Activated CD4-positive, alpha-beta T cell treated with anti-CD3 and anti-CD28 coated beads for 36 hours (primary cell): ENCODE measurements at regions of chr10 and their contacts with region 1.

Region 1: DNA sequence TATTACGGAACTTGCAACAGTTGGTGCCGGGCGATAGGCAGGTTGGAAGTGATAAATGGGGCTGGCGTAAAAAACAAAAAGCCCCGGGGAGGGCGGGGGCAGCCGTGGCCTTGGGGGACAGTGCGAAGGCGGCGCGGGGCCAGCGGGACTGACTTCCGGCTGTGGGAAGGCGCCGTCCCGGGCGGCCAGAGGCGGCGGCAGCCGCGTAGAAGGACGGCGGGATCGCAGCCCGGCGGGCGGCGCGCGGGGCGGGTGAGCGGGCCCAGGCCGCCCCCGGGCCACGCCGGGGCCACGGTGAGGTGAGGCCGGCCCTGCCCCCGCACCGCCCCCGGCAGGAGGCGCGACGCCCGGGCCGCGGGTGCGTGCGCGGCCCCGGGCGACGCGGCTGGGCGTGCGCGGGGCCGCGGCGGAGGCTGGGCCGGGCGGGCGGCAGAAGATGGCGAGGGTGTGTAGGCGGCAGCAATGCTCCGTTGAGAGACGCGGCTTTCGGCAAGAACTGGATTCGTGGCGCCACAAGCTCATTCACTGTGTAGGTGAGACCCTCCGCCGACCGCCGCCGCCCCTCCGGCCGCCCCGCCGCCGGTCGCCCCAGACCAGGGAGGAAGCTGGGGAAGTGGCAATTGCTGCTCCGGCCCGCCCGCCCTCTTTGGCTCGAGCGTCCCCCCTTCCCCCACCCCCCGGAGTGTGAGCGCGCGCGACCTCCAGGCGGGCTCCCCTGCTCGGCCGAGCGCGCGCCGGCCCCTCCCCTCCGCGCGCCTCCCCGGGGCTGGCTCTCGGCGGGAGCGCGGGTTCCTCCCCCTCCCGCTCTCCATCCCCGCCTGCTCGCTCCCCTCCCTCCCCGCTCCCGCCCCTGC is at the start of gene LCOR:
- DNase-seq: peak; percentile 91
- ATAC-seq: peak; percentile 71
- H3K4me3 Mint-ChIP-seq: peak within 1 kb of the TSS; percentile 96
- H3K27ac Mint-ChIP-seq: peak within 1 kb of the TSS; percentile 96
- H3K4me1 Mint-ChIP-seq: peaks cover 49% of the 10 kb centered on the region
- H3K27me3 Mint-ChIP-seq: no peaks in the 10 kb centered on the region
- total RNA-seq, gene LCOR: 22.0 to 23.4 TPM

Region 2: GRCh38 chr10:96089670-96090462 is 742.2 kb before region 1 on chr10:
- CTCF ChIA-PET with region 1: no interaction called
- POLR2A ChIA-PET with region 1: no interaction called
- intact Hi-C with region 1: loop called in 1 of 2 experiments (anchors 1 kb)
- DNase-seq: peak; percentile 95
- ATAC-seq: peak; percentile 91
- H3K4me3 Mint-ChIP-seq: peak overlapping the region; percentile 92
- H3K27ac Mint-ChIP-seq: peak overlapping the region; percentile 99
- H3K4me1 Mint-ChIP-seq: peaks cover 6% of the 10 kb centered on the region
- H3K27me3 Mint-ChIP-seq: peaks cover 15% of the 10 kb centered on the region

Region 3: GRCh38 chr10:96586419-96587263 is 245.5 kb before region 1 on chr10 and contains the start of gene TM9SF3:
- CTCF ChIA-PET with region 1: interaction called, 3 read pairs
- POLR2A ChIA-PET with region 1: no interaction called
- intact Hi-C with region 1: loop called (anchors 1 kb)
- DNase-seq: peak; percentile 97
- ATAC-seq: peak; percentile 64
- H3K4me3 Mint-ChIP-seq: no peak within 1 kb of the TSS
- H3K27ac Mint-ChIP-seq: peak within 1 kb of the TSS; percentile 92
- H3K4me1 Mint-ChIP-seq: peaks cover 33% of the 10 kb centered on the region
- H3K27me3 Mint-ChIP-seq: peaks cover 6% of the 10 kb centered on the region
- total RNA-seq, gene TM9SF3: 45.3 to 70.2 TPM

Region 4: GRCh38 chr10:96720422-96721206 is 111.5 kb before region 1 on chr10 and contains the start of gene PIK3AP1:
- CTCF ChIA-PET with region 1: no interaction called
- POLR2A ChIA-PET with region 1: no interaction called
- intact Hi-C with region 1: no loop called
- DNase-seq: peak; percentile 58
- ATAC-seq: peak; percentile 78
- H3K4me3 Mint-ChIP-seq: peak within 1 kb of the TSS; percentile 93
- H3K27ac Mint-ChIP-seq: peak within 1 kb of the TSS; percentile 84
- H3K4me1 Mint-ChIP-seq: peaks cover 12% of the 10 kb centered on the region
- H3K27me3 Mint-ChIP-seq: peaks cover 2% of the 10 kb centered on the region
- total RNA-seq, gene PIK3AP1: 2.7 to 2.9 TPM

Region 5: GRCh38 chr10:96978621-96979154 is 146.6 kb after region 1 on chr10:
- CTCF ChIA-PET with region 1: no interaction called
- POLR2A ChIA-PET with region 1: no interaction called
- intact Hi-C with region 1: loop called in 1 of 2 experiments (anchors 2 kb)
- DNase-seq: no peak
- ATAC-seq: peak; percentile 91
- H3K4me3 Mint-ChIP-seq: peak overlapping the region; percentile 12
- H3K27ac Mint-ChIP-seq: peak overlapping the region; percentile 85
- H3K4me1 Mint-ChIP-seq: peaks cover 21% of the 10 kb centered on the region
- H3K27me3 Mint-ChIP-seq: no peaks in the 10 kb centered on the region

Region 6: GRCh38 chr10:97425964-97426775 is 594.1 kb after region 1 on chr10 and contains the start of gene PGAM1:
- CTCF ChIA-PET with region 1: no interaction called
- POLR2A ChIA-PET with region 1: no interaction called
- intact Hi-C with region 1: loop called in 1 of 2 experiments (anchors 5 kb)
- DNase-seq: peak; percentile 97
- ATAC-seq: peak; percentile 71
- H3K4me3 Mint-ChIP-seq: peak within 1 kb of the TSS; percentile 96
- H3K27ac Mint-ChIP-seq: peak within 1 kb of the TSS; percentile 98
- H3K4me1 Mint-ChIP-seq: peaks cover 52% of the 10 kb centered on the region
- H3K27me3 Mint-ChIP-seq: no peaks in the 10 kb centered on the region
- total RNA-seq, gene PGAM1: 1,151 to 1,499 TPM

Region 7: DNA sequence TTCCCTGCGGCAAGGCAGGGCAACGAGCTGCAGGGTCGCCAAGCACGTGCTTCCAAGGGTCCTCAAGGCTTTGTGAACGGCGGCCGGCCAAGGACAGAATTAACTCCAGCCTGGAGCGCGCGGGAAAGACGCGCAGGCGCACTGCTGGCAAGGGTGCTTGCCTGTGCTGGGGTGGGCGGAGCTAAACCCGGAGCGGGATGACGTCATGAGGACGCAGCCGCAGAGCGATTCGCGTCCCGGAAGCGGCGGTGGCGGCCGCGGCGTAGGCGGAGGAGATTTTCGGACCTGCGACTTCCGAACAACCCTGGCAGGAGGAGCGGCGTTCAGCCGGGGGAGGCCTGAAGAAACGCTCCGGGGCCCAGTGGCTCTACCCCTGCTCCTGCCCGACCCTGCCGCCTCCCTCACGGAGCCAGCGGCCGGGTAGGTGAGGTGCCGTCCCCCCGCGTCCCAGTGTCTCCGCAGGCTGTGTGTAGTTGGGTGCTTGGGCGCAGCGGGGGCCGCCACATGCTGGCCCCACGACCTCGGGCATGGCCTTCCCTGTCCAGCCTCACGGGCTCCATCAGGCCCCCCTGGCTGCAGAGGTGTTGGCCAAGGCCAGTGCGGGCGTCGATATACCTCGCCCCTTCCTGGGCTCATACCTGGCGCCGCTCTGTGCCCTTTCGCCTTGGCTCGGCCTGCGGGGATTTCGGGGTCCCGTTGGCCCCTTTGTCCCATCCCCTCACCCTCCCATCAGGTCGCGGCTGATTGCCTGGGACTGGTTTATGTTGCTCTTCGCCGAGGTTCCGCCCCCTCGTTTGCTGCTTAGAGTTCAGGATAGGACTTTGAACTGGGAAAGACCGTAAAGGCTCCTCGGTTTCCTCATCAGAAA is 905.0 kb after region 1 on chr10 and contains the start of gene ZFYVE27:
- CTCF ChIA-PET with region 1: no interaction called
- POLR2A ChIA-PET with region 1: no interaction called
- intact Hi-C with region 1: loop called in 1 of 2 experiments (anchors 5 kb)
- DNase-seq: peak; percentile 98
- ATAC-seq: peak; percentile 90
- H3K4me3 Mint-ChIP-seq: peak within 1 kb of the TSS; percentile 88
- H3K27ac Mint-ChIP-seq: peak within 1 kb of the TSS; percentile 93
- H3K4me1 Mint-ChIP-seq: peaks cover 45% of the 10 kb centered on the region
- H3K27me3 Mint-ChIP-seq: no peaks in the 10 kb centered on the region
- total RNA-seq, gene ZFYVE27: 20.2 to 22.6 TPM